ENCODE measurements at regions of chr3 and their contacts with region 1.

Region 1: DNA sequence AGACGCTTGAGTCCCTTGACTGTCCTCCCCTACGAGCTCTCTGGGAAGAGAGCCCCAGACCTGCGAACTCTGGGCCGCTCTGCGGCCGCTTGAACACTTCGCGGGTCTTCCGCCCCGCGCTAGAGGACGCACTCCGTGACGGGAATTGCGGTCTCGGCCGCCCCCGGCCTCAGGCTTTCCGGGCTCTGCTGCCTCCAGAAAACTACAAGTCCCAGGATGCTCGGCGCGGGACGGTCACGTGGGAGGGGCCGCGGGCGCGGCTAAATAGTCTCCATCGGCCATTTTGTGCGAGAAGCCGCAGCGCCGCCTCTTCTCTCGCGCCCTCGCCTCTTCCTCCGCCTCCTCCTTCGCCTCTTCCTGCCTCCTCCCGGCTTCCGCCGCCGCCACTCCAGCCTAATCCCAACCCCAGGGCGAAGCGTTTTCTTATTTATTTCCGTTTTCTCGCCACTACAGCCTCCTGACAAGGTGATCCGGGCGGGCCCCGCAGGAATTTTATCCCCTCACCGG is at the start of gene EIF1B:
- DNase-seq: peak; percentile 96 to 100 (median 99)

Region 2: DNA sequence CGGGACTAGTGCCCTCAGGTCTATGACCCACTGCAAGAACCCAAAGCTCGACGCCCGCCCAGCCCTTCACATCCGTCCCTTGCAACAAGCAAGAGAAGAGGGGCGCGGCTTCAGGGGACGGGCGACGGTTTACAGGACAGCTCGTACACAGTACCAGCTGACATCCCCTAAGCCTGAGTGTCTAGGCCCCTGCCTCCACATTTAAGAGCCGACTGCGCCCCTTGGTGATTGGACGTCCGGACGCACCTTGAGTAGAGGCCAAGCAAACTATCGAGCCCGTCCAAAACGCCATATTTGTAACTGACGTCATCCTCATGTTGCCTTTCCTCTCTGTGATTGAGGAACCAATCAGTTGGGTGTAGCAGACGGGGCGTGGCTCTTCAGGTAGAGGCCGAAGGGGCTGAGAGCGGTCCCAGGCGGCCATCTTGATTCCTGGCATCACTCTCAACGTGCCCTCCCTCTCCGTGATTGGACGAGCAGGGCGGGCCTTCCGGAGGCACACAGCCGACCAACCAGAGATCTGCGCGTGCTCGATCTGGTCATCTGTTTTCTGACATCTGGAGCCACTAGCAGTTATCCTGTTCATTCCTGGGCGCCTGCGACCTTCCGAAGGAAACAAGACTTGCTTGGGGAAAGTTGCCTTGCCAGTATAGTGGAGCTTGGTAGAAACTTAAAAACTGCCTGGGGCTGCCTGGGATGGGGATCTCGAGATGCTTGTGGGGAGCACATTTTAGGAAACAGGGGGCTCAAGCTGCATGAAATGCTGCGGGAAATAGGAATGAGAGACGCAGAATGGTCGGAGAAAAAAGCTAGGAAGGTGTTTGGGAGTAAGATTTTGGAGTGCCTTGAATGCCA is 143.6 kb after region 1 on chr3:
- intact Hi-C with region 1: loop called (anchors 5 kb)
- DNase-seq: peak; percentile 94 to 100 (median 98)

Measured in posterior cingulate gyrus (tissue), 11 donors.